Endothelial cell of umbilical vein (primary cell): ENCODE measurements at regions of chr19 and their contacts with region 1.

Region 1: DNA sequence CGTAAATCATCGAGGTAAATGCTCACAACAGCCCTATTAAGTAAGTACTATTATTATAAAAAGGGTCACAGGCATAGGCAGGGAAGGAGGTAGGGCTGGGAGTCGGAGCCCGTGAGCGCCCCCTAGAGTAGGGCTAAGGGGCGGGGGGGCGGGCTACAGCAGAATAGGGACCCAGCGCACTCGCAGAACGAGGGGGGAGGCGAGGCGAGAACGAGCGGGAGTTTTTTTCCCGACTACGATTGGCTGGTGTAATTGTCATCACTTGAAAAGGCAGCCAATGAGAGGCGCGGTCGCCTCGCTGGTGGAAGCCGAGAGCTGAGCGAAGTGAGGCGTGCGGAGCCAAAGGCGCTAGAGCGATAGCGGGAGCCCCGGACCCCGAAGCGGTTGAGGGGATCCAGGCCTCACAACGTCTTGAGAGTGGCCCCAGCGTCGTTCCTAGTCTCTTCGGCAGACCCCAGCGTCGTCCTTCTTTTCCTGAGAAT is 24.2 kb downstream of the KEAP1 start:
- DNase-seq: peak; percentile 95
- H3K4me3 ChIP-seq: peak overlapping the region in 1 of 3 experiments; percentile 11
- H3K27ac ChIP-seq: no peak overlapping the region
- H3K4me1 ChIP-seq: peaks cover 7% of the 10 kb centered on the region
- H3K27me3 ChIP-seq: no peaks in the 10 kb centered on the region
- CTCF ChIP-seq: peak in 1 of 2 donors; percentile 71
- POLR2A ChIP-seq: no peak

Region 2: DNA sequence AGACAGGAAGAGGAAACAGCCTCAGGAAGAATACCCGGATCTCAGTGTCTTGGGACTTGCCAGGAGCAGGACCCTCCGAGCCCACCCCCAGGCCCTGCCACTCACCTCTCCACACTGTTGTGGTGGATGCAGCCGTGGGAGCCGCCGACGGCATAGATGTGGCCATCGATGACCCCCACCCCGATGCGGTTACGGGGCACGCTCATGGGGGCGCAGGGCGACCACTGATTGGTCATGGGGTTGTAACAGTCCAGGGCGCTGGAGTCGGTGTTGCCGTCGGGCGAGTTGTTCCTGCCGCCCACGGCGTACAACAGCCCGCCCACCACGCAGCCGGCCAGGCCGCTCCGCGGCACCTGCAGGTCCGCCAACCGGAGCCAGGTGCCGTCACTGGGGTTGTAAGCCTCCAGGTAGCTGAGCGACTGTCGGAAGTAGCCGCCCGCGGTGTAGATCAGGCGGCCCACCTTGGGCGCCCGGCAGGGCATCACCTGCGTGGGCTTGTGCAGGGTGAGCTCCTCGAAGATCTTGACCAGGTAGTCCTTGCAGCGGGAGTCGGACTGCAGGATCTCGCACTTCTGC is 12.6 kb after region 1 on chr19:
- CTCF ChIA-PET with region 1: interaction called, 12 read pairs
- POLR2A ChIA-PET with region 1: interaction called, 3 read pairs
- dilution Hi-C with region 1: no loop called
- intact Hi-C with region 1: no loop called
- DNase-seq: no peak
- H3K4me3 ChIP-seq: no peak overlapping the region
- H3K27ac ChIP-seq: no peak overlapping the region
- H3K4me1 ChIP-seq: no peaks in the 10 kb centered on the region
- H3K27me3 ChIP-seq: no peaks in the 10 kb centered on the region
- CTCF ChIP-seq: no peak
- POLR2A ChIP-seq: no peak

Region 3: DNA sequence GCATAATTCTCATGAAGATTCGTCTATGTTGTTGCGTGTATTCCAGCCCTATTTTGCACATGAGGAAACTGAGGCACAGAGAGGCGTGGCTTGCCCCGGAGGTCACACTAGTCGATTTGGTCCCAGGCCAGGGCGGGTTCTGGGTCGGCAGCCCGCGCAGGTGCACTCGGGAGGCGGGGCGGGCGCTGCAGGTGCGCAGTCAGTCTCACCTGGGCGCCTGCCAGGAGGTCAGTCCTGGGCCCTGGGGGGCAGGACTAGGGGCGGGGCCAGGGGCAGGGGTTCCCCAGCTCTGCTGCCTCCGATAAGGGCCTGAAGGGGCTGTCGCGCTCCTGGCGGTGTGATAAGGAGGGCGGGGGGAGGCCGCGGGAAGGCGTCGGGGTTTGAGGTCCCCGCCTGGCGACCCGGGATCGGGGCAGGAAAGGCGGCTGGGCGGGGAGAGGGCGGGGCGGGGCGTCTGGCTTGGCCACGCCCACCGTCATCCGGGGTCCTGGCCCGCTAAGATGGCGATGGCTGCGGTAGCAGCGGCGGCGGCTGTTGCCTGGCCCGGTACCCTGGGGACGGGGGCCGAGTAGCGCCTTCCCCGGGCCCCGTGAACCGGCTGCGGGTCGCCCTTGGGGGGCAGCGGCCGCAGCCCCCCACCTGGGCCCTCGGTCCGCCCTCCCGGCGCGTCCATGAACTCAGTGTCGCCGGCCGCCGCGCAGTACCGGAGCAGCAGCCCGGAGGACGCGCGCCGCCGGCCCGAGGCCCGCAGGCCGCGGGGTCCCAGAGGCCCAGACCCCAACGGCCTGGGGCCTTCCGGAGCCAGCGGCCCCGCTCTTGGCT is 64.7 kb after region 1 on chr19 and contains the start of gene ATG4D:
- CTCF ChIA-PET with region 1: interaction called, 11 read pairs
- POLR2A ChIA-PET with region 1: no interaction called
- dilution Hi-C with region 1: no loop called
- intact Hi-C with region 1: no loop called
- DNase-seq: peak; percentile 58
- H3K4me3 ChIP-seq: peak within 1 kb of the TSS; percentile 36 to 91 (median 58)
- H3K27ac ChIP-seq: peak within 1 kb of the TSS; percentile 42
- H3K4me1 ChIP-seq: peaks cover 4% of the 10 kb centered on the region
- H3K27me3 ChIP-seq: no peaks in the 10 kb centered on the region
- CTCF ChIP-seq: no peak
- POLR2A ChIP-seq: peak; percentile 75
- total RNA-seq, gene ATG4D: 19.8 and 21.8 TPM in 2 replicates